Heart left ventricle (tissue), 16 donors: ENCODE measurements at regions of chr3 and their contacts with region 1.

Region 1: GRCh38 chr3:29430558-29430971 is 149.7 kb downstream of the RBMS3 start:
- DNase-seq: no peak
- ATAC-seq: no peak
- H3K4me3 ChIP-seq: no peak overlapping the region
- H3K27ac ChIP-seq: peak overlapping the region in 3 of 12 donors; percentile 2 to 21 (median 15)
- H3K4me1 ChIP-seq: peaks cover 0 to 69% (median 32%) of the 10 kb centered on the region in 12 donors
- H3K27me3 ChIP-seq: no peaks in the 10 kb centered on the region
- CTCF ChIP-seq: no peak
- POLR2A ChIP-seq: no peak

Region 2: GRCh38 chr3:29186982-29187725 is 243.4 kb before region 1 on chr3:
- intact Hi-C with region 1: loop called in 1 of 10 experiments (anchors 10 kb)
- DNase-seq: no peak
- ATAC-seq: no peak
- H3K4me3 ChIP-seq: no peak overlapping the region
- H3K27ac ChIP-seq: no peak overlapping the region
- H3K4me1 ChIP-seq: peaks cover 0 to 12% (median 4%) of the 10 kb centered on the region in 12 donors
- H3K27me3 ChIP-seq: no peaks in the 10 kb centered on the region
- CTCF ChIP-seq: no peak
- POLR2A ChIP-seq: no peak

Region 3: DNA sequence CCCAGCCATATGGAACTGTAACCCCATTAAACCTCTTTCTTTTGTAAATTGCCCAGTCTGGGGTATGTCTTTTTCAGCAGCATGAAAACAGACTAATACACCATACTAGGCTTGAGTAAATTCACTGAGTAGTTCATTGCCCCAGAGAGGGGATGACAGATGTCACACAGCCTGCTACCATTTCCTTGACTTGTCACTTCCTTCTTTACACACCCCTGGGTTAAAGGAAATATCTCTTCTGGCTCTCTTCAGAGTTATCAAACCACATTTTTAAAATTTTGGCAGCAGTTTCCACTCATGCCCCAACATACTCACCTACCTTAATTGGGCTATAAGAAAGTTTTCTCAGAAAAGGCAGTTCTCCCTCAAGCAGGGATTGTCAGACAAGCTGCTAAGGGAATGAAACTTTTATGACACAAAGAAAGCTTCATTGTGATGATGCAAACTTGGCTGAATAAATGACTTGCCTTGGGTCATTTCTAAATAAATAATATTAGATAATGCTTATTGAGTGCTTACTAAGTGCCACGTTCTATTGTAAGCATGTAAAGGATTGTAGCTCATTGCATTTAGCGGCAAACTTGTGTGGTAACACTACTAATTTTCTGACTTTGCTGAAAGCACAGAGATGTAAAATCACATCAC is 217.7 kb before region 1 on chr3:
- intact Hi-C with region 1: no loop called
- DNase-seq: no peak
- ATAC-seq: no peak
- H3K4me3 ChIP-seq: no peak overlapping the region
- H3K27ac ChIP-seq: no peak overlapping the region
- H3K4me1 ChIP-seq: no peaks in the 10 kb centered on the region
- H3K27me3 ChIP-seq: no peaks in the 10 kb centered on the region
- CTCF ChIP-seq: no peak
- POLR2A ChIP-seq: no peak

Region 4: GRCh38 chr3:29335438-29335837 is 95.1 kb before region 1 on chr3:
- intact Hi-C with region 1: loop called in 2 of 10 experiments (anchors 10 kb)
- DNase-seq: peak; percentile 65 to 89 (median 86)
- ATAC-seq: peak; percentile 95 to 98 (median 96)
- H3K4me3 ChIP-seq: peak overlapping the region in 10 of 12 donors; percentile 6 to 48 (median 35)
- H3K27ac ChIP-seq: peak overlapping the region; percentile 29 to 91 (median 76)
- H3K4me1 ChIP-seq: peaks cover 14 to 96% (median 52%) of the 10 kb centered on the region in 12 donors
- H3K27me3 ChIP-seq: no peaks in the 10 kb centered on the region
- CTCF ChIP-seq: no peak
- POLR2A ChIP-seq: no peak